ENCODE measurements at regions of chr1 and their contacts with region 1.

Region 1: GRCh38 chr1:248837794-248838356 is at the start of gene ZNF672:
- DNase-seq: peak; percentile 99 to 100
- ATAC-seq: peak; percentile 90 to 92 (median 92)
- H3K4me3 ChIP-seq: peak within 1 kb of the TSS; percentile 74
- H3K27ac ChIP-seq: peak within 1 kb of the TSS; percentile 97
- H3K4me1 ChIP-seq: peaks cover 37% of the 10 kb centered on the region
- H3K27me3 ChIP-seq: no peaks in the 10 kb centered on the region
- CTCF ChIP-seq: no peak
- total RNA-seq, gene ZNF672: 46.2 to 57.0 (median 48.8) TPM

Region 2: DNA sequence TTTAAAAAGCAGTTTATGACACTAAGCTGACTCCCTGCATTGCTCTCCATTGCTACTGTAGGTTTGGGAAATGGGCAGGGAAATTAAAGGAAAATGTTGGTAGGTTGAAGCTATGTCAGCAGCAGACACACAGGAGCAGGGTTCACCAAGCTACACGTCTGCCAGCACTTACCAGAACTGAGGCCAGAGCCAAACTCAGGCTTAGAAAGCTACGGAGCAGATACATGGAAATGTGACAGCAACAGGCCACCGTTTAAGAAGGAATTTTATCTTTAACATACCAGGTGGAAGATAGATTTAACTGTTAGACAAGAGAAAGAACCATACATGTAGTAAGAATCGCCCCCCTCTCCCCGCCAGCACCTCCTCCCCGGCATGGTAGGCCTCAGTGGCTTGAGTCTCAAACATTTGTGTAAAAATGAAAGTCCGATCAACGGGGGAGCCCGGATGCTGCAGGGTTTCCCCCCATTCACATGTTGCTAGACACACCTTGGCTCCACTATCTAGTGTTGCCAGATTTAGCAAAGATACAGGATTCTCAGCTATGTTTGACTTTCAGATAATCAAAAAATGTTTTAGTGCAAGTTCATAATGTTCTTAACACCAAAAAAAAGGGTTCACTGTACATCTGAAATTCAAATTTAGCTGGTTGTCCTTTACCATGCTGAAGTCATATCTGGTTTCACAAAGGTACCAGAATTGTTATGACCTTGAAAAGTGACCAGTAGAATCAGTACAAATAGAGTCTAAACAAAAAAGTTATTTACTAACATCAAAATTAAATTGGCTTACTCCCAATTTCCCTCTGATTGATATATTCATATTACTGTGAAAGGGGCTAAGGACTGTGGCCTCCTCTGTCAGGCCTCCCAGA is 209.7 kb before region 1 on chr1:
- intact Hi-C with region 1: no loop called
- DNase-seq: no peak
- ATAC-seq: no peak
- H3K4me3 ChIP-seq: no peak overlapping the region
- H3K27ac ChIP-seq: no peak overlapping the region
- H3K4me1 ChIP-seq: no peaks in the 10 kb centered on the region
- H3K27me3 ChIP-seq: no peaks in the 10 kb centered on the region
- CTCF ChIP-seq: no peak

Region 3: GRCh38 chr1:248821101-248821500 is 16.8 kb before region 1 on chr1:
- intact Hi-C with region 1: no loop called
- DNase-seq: no peak
- ATAC-seq: peak in 1 of 4 donors; percentile 32
- H3K4me3 ChIP-seq: no peak overlapping the region
- H3K27ac ChIP-seq: no peak overlapping the region
- H3K4me1 ChIP-seq: peaks cover 50% of the 10 kb centered on the region
- H3K27me3 ChIP-seq: no peaks in the 10 kb centered on the region
- CTCF ChIP-seq: no peak

Region 4: GRCh38 chr1:248858891-248859889 is 21.3 kb after region 1 on chr1 and contains the start of gene ZNF692:
- intact Hi-C with region 1: loop called (anchors 1 to 2 kb)
- DNase-seq: peak; percentile 99
- ATAC-seq: peak; percentile 90 to 92 (median 92)
- H3K4me3 ChIP-seq: peak within 1 kb of the TSS; percentile 76
- H3K27ac ChIP-seq: peak within 1 kb of the TSS; percentile 93
- H3K4me1 ChIP-seq: peaks cover 21% of the 10 kb centered on the region
- H3K27me3 ChIP-seq: no peaks in the 10 kb centered on the region
- CTCF ChIP-seq: no peak
- total RNA-seq, gene ZNF692: 13.4 to 22.9 (median 16.0) TPM

Measured in psoas muscle (tissue), 8 donors.